ENCODE measurements at regions of chr14 and their contacts with region 1.

Region 1: GRCh38 chr14:75831458-75831857 is 150.3 kb downstream of the TGFB3 start:
- DNase-seq: peak; percentile 87
- ATAC-seq: peak; percentile 62
- H3K4me3 ChIP-seq: peak overlapping the region; percentile 63
- H3K27ac ChIP-seq: peak overlapping the region; percentile 99
- H3K4me1 ChIP-seq: peaks cover 56% of the 10 kb centered on the region
- H3K27me3 ChIP-seq: no peaks in the 10 kb centered on the region
- CTCF ChIP-seq: no peak

Region 2: GRCh38 chr14:75875958-75876357 is 44.5 kb after region 1 on chr14:
- CTCF ChIA-PET with region 1: no interaction called
- POLR2A ChIA-PET with region 1: no interaction called
- intact Hi-C with region 1: loop called (anchors 1 kb)
- DNase-seq: no peak
- ATAC-seq: no peak
- H3K4me3 ChIP-seq: no peak overlapping the region
- H3K27ac ChIP-seq: peak overlapping the region; percentile 96
- H3K4me1 ChIP-seq: peaks cover 43% of the 10 kb centered on the region
- H3K27me3 ChIP-seq: no peaks in the 10 kb centered on the region
- CTCF ChIP-seq: no peak